ENCODE measurements at regions of chr7 and their contacts with region 1.

Region 1: GRCh38 chr7:41188163-41189130 is 514.4 kb downstream of the INHBA start:
- DNase-seq: peak; percentile 52 to 62
- H3K4me3 ChIP-seq: no peak overlapping the region
- H3K4me3 Mint-ChIP-seq: peak overlapping the region; percentile 70
- H3K27ac Mint-ChIP-seq: peak overlapping the region; percentile 97
- H3K4me1 ChIP-seq: peaks cover 40% of the 10 kb centered on the region
- H3K4me1 Mint-ChIP-seq: peaks cover 21% of the 10 kb centered on the region
- H3K27me3 ChIP-seq: no peaks in the 10 kb centered on the region
- H3K27me3 Mint-ChIP-seq: no peaks in the 10 kb centered on the region
- CTCF ChIP-seq: no peak

Region 2: DNA sequence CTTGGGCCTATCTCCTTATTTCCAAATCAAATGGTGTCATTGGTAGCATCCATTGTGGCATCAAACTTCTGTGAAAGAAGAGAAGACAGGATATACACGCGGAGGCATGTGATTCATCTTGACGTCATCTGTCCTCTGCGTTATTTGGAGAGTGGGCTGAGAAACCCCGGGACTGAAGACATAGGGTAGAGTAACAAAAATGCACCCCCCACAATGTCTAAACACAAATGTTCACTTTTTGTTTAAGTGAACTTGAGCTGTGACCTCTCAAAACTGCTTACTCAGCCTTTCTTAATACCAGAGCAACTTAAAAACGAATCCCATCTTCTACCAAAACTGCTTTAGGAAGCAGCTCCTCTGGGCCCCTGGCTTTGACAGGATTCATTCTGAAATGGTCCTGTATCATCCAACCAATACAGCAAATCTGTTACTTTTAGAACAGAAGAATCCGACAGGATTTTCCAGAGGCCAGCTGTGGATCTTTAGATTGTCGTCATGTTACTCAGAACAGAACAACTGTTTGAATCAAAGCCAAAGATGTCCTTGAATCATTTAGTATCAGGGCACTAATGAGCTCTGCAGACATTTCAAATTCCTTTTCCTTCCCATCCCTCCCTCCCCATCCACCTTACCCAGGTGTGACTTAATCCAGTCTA is 615.5 kb before region 1 on chr7:
- CTCF ChIA-PET with region 1: no interaction called
- POLR2A ChIA-PET with region 1: interaction called, 13 read pairs
- intact Hi-C with region 1: no loop called
- DNase-seq: no peak
- H3K4me3 ChIP-seq: no peak overlapping the region
- H3K4me3 Mint-ChIP-seq: no peak overlapping the region
- H3K27ac Mint-ChIP-seq: no peak overlapping the region
- H3K4me1 ChIP-seq: no peaks in the 10 kb centered on the region
- H3K4me1 Mint-ChIP-seq: no peaks in the 10 kb centered on the region
- H3K27me3 ChIP-seq: no peaks in the 10 kb centered on the region
- H3K27me3 Mint-ChIP-seq: no peaks in the 10 kb centered on the region
- CTCF ChIP-seq: no peak

Region 3: DNA sequence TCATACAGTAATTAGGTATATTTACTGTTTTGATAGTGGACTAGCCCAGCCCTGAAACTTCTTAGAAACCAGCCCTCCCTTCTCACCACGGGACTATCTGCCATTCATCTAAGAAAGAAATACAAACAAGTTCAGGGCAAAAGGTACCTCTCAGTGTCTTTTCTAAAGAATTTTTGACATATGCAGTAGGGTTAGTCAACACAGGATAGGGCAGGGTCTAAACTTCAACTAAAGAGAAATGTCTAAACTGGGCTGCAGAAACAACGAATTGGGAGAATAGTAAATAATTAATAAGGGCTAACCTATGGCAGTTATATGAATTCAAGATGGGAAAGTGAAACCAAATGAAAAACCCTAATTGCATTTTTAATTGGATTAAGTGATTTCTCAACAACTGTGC is 17.8 kb after region 1 on chr7:
- CTCF ChIA-PET with region 1: no interaction called
- POLR2A ChIA-PET with region 1: no interaction called
- intact Hi-C with region 1: loop called (anchors 1 kb)
- DNase-seq: peak in 1 of 2 experiments; percentile 47
- H3K4me3 ChIP-seq: no peak overlapping the region
- H3K4me3 Mint-ChIP-seq: peak overlapping the region; percentile 68
- H3K27ac Mint-ChIP-seq: peak overlapping the region; percentile 84
- H3K4me1 ChIP-seq: peaks cover 20% of the 10 kb centered on the region
- H3K4me1 Mint-ChIP-seq: peaks cover 16% of the 10 kb centered on the region
- H3K27me3 ChIP-seq: no peaks in the 10 kb centered on the region
- H3K27me3 Mint-ChIP-seq: no peaks in the 10 kb centered on the region
- CTCF ChIP-seq: no peak

Region 4: GRCh38 chr7:41224063-41224806 is 35.8 kb after region 1 on chr7:
- CTCF ChIA-PET with region 1: no interaction called
- POLR2A ChIA-PET with region 1: no interaction called
- intact Hi-C with region 1: loop called (anchors 1 kb)
- DNase-seq: peak; percentile 45 to 63
- H3K4me3 ChIP-seq: no peak overlapping the region
- H3K4me3 Mint-ChIP-seq: no peak overlapping the region
- H3K27ac Mint-ChIP-seq: no peak overlapping the region
- H3K4me1 ChIP-seq: peaks cover 15% of the 10 kb centered on the region
- H3K4me1 Mint-ChIP-seq: peaks cover 10% of the 10 kb centered on the region
- H3K27me3 ChIP-seq: no peaks in the 10 kb centered on the region
- H3K27me3 Mint-ChIP-seq: no peaks in the 10 kb centered on the region
- CTCF ChIP-seq: no peak

Region 5: GRCh38 chr7:41238851-41239331 is 50.4 kb after region 1 on chr7:
- CTCF ChIA-PET with region 1: interaction called, 4 read pairs
- POLR2A ChIA-PET with region 1: no interaction called
- intact Hi-C with region 1: loop called (anchors 1 kb)
- DNase-seq: no peak
- H3K4me3 ChIP-seq: no peak overlapping the region
- H3K4me3 Mint-ChIP-seq: no peak overlapping the region
- H3K27ac Mint-ChIP-seq: no peak overlapping the region
- H3K4me1 ChIP-seq: peaks cover 55% of the 10 kb centered on the region
- H3K4me1 Mint-ChIP-seq: peaks cover 51% of the 10 kb centered on the region
- H3K27me3 ChIP-seq: no peaks in the 10 kb centered on the region
- H3K27me3 Mint-ChIP-seq: no peaks in the 10 kb centered on the region
- CTCF ChIP-seq: no peak

Measured in Caco-2 (cell line).